Endothelial cell of umbilical vein (primary cell): ENCODE measurements at regions of chr1 and their contacts with region 1.

Region 1: DNA sequence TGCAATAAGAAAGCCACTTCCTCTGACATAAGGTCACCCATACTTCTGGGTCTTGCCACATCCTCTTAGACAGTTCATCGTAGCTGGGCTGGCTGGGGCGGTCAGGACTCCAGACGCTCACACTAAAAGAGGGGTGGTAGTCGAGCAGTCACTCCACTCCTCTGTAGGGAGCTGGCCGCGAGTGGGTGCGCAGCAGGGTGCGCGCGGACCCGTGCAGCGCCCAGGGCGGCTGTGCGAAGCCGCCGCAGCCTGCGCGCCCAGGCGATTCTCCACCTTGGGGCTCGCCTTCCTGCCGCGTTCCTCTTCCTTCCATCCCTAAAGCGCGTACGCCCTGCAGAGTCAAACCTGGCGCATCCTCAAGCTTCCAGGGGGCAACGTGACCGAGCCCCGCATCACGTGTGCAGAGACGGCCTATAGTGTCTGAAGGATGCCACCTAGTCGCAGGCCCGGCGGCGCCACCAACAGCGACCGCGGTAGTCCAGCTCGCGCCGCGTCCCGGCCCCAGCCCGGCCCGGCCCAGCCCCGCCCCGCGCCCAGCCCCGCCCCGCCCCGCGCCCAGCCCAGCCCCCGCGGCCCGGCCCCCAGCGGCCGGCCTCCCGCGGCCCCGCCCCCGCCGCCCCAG is 360 bp upstream of the PRDX6 start:
- DNase-seq: peak; percentile 81
- H3K4me3 ChIP-seq: peak overlapping the region; percentile 63 to 78 (median 70)
- H3K27ac ChIP-seq: peak overlapping the region; percentile 79
- H3K4me1 ChIP-seq: peaks cover 53% of the 10 kb centered on the region
- H3K27me3 ChIP-seq: no peaks in the 10 kb centered on the region
- CTCF ChIP-seq: peak in 1 of 2 donors; percentile 3
- POLR2A ChIP-seq: peak; percentile 78

Region 2: DNA sequence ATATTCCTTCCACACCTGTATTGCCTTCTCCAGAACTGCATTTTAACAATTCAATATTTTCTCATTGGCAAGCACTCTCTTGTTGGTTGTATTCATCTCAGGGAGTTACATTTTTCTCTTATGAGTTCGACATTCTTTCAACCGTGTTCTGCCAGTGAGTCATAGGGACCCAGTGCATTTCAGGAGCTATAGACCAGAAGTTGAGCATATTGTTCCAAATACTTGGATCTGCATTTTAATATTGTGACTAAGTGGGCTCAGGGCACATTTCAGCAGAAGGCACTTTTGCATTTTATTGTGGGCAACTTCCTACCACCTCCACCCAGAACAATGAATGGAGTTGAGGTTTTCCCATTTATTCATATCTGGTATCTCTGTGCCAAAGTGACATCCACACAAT is 558.8 kb before region 1 on chr1:
- CTCF ChIA-PET with region 1: no interaction called
- POLR2A ChIA-PET with region 1: no interaction called
- dilution Hi-C with region 1: no loop called
- intact Hi-C with region 1: loop called (anchors 10 kb)
- DNase-seq: peak; percentile 96
- H3K4me3 ChIP-seq: no peak overlapping the region
- H3K27ac ChIP-seq: peak overlapping the region; percentile 84
- H3K4me1 ChIP-seq: peaks cover 62% of the 10 kb centered on the region
- H3K27me3 ChIP-seq: no peaks in the 10 kb centered on the region
- CTCF ChIP-seq: no peak
- POLR2A ChIP-seq: peak; percentile 68

Region 3: GRCh38 chr1:173255214-173255813 is 221.5 kb before region 1 on chr1:
- CTCF ChIA-PET with region 1: interaction called, 3 read pairs
- POLR2A ChIA-PET with region 1: no interaction called
- dilution Hi-C with region 1: no loop called
- intact Hi-C with region 1: loop called (anchors 5 kb)
- DNase-seq: peak; percentile 56
- H3K4me3 ChIP-seq: no peak overlapping the region
- H3K27ac ChIP-seq: no peak overlapping the region
- H3K4me1 ChIP-seq: no peaks in the 10 kb centered on the region
- H3K27me3 ChIP-seq: no peaks in the 10 kb centered on the region
- CTCF ChIP-seq: peak; percentile 61 to 66
- POLR2A ChIP-seq: no peak

Region 4: GRCh38 chr1:173429471-173430402 is 47.0 kb before region 1 on chr1:
- CTCF ChIA-PET with region 1: interaction called, 33 read pairs
- POLR2A ChIA-PET with region 1: interaction called, 6 read pairs
- dilution Hi-C with region 1: no loop called
- intact Hi-C with region 1: loop called (anchors 1 kb)
- DNase-seq: peak; percentile 75
- H3K4me3 ChIP-seq: no peak overlapping the region
- H3K27ac ChIP-seq: peak overlapping the region; percentile 64
- H3K4me1 ChIP-seq: peaks cover 12% of the 10 kb centered on the region
- H3K27me3 ChIP-seq: no peaks in the 10 kb centered on the region
- CTCF ChIP-seq: peak; percentile 56 to 65
- POLR2A ChIP-seq: no peak

Region 5: GRCh38 chr1:173669491-173669941 is 192.7 kb after region 1 on chr1 and contains the start of gene ANKRD45:
- CTCF ChIA-PET with region 1: no interaction called
- POLR2A ChIA-PET with region 1: no interaction called
- dilution Hi-C with region 1: no loop called
- intact Hi-C with region 1: no loop called
- DNase-seq: peak; percentile 57
- H3K4me3 ChIP-seq: peak within 1 kb of the TSS; percentile 4 to 43 (median 41)
- H3K27ac ChIP-seq: no peak within 1 kb of the TSS
- H3K4me1 ChIP-seq: no peaks in the 10 kb centered on the region
- H3K27me3 ChIP-seq: peaks cover 0 to 5% of the 10 kb centered on the region in 2 experiments
- CTCF ChIP-seq: peak in 1 of 2 donors; percentile 16
- POLR2A ChIP-seq: no peak
- total RNA-seq, gene ANKRD45: 0.37 and 0.62 TPM in 2 replicates

Region 6: DNA sequence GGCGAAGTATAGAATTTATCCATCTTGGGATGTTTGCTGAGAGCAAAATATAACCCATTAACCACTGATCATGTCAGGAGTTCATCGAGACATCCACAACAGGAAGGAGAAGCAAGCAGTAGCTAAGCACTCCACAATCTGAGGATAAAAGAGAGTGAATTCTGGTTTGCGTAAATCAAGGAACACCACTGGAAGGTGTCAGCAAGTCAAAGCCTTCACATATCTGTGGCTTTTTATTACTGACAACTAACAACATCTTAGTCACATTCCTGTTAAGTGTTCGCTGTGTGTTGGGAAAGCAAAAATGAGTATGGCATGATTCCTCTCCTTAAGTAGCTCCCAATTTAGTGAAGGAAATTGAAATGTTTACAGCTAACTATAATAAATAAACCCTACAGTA is 303.2 kb after region 1 on chr1:
- CTCF ChIA-PET with region 1: no interaction called
- POLR2A ChIA-PET with region 1: no interaction called
- dilution Hi-C with region 1: no loop called
- intact Hi-C with region 1: no loop called
- DNase-seq: no peak
- H3K4me3 ChIP-seq: no peak overlapping the region
- H3K27ac ChIP-seq: no peak overlapping the region
- H3K4me1 ChIP-seq: no peaks in the 10 kb centered on the region
- H3K27me3 ChIP-seq: no peaks in the 10 kb centered on the region
- CTCF ChIP-seq: no peak
- POLR2A ChIP-seq: no peak

Region 7: GRCh38 chr1:173824331-173825081 is 347.7 kb after region 1 on chr1 and contains the starts of genes CENPL and DARS2:
- CTCF ChIA-PET with region 1: interaction called, 3 read pairs
- POLR2A ChIA-PET with region 1: no interaction called
- dilution Hi-C with region 1: no loop called
- intact Hi-C with region 1: loop called (anchors 2 kb)
- DNase-seq: peak; percentile 98
- H3K4me3 ChIP-seq: peak within 1 kb of the TSS; percentile 87 to 92 (median 87)
- H3K27ac ChIP-seq: peak within 1 kb of the TSS; percentile 92
- H3K4me1 ChIP-seq: peaks cover 15% of the 10 kb centered on the region
- H3K27me3 ChIP-seq: no peaks in the 10 kb centered on the region
- CTCF ChIP-seq: no peak
- POLR2A ChIP-seq: peak; percentile 85
- total RNA-seq, gene CENPL: 19.0 and 20.8 TPM in 2 replicates
- total RNA-seq, gene DARS2: 30.5 and 33.6 TPM in 2 replicates

Region 8: DNA sequence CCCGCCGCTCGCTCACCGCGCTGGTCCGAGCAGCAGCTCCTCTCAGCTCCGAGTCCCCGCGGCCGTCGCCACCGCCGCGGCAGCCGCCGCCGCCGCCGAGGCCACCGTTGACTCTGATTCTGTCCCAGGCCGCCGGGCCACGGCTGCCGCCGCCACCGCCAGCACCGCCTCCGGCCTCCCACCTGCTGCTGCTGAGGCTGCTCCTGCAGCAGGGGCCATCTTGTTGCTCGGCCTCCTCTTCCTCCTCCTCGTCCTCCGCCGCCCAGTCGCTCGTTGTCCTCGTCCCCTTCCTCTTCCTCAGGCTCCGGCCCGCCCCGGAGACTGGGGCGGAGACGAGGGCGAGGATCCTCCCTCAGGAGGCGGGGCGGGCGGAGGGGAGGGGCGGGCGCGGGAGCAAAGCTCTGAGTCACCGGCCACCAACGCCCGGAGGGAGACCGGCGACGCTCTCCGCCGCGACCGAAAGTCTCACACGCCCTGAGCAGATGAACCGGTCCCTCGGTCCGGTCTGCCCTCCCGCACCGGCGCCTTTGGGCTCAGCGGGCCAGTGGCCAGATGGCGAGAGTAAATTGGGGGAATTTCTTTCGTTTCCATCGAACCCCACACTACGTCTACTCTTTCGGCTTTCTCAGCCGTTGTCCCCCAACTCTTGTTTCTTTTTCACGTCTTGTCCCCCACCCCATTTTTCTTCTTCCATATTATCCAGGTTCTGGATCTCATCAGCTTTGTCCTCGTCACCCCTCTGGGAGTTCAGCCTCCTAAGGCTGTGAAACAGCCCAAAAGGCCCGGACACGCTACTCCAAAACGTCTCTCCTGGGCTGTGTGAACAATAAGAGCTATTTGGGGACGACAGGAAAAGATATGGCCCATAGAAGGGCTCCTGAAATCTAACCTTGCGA is 545.6 kb after region 1 on chr1 and contains the start of gene RC3H1:
- CTCF ChIA-PET with region 1: no interaction called
- POLR2A ChIA-PET with region 1: no interaction called
- dilution Hi-C with region 1: no loop called
- intact Hi-C with region 1: loop called (anchors 5 kb)
- DNase-seq: peak; percentile 91
- H3K4me3 ChIP-seq: peak within 1 kb of the TSS; percentile 82 to 91 (median 87)
- H3K27ac ChIP-seq: peak within 1 kb of the TSS; percentile 88
- H3K4me1 ChIP-seq: peaks cover 22% of the 10 kb centered on the region
- H3K27me3 ChIP-seq: no peaks in the 10 kb centered on the region
- CTCF ChIP-seq: no peak
- POLR2A ChIP-seq: peak; percentile 74
- total RNA-seq, gene RC3H1: 30.0 and 41.4 TPM in 2 replicates